ENCODE measurements at regions of chr16 and their contacts with region 1.

Region 1: DNA sequence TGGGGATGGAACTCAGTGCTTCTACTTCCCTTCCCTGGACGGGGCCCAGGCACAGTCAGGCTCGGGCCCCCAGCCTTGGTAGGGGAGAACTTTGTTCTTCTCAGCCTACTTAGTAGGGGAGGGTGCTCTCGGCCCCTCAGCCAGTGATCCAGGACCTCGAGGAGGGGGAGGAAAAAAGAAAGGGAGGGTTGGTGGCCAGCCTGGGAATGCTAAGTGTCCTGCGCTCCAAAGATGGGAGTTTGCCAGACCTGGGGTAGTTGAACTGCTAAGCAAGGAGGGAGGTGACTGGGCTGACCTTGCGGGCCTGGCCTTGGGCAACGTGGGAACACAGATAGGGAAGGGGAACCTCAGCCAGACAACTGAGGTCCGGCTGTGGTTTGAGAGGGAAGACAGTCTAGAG is 12.2 kb downstream of the ADGRG1 start:
- DNase-seq: peak in 1 of 5 donors; percentile 61
- ATAC-seq: no peak
- H3K4me3 ChIP-seq: no peak overlapping the region
- H3K27ac ChIP-seq: peak overlapping the region; percentile 22 to 93 (median 79)
- H3K4me1 ChIP-seq: peaks cover 5 to 82% (median 54%) of the 10 kb centered on the region in 12 donors
- H3K27me3 ChIP-seq: no peaks in the 10 kb centered on the region
- CTCF ChIP-seq: no peak
- POLR2A ChIP-seq: no peak

Region 2: GRCh38 chr16:57588831-57589230 is 51.8 kb before region 1 on chr16:
- intact Hi-C with region 1: no loop called
- DNase-seq: peak in 1 of 5 donors; percentile 2
- ATAC-seq: no peak
- H3K4me3 ChIP-seq: no peak overlapping the region
- H3K27ac ChIP-seq: no peak overlapping the region
- H3K4me1 ChIP-seq: peaks cover 0 to 25% (median 6%) of the 10 kb centered on the region in 12 donors
- H3K27me3 ChIP-seq: peaks cover 0 to 7% (median 0%) of the 10 kb centered on the region in 9 donors
- CTCF ChIP-seq: no peak
- POLR2A ChIP-seq: no peak

Region 3: GRCh38 chr16:57618306-57619127 is 22.1 kb before region 1 on chr16:
- intact Hi-C with region 1: no loop called
- DNase-seq: peak in 1 of 5 donors; percentile 3
- ATAC-seq: no peak
- H3K4me3 ChIP-seq: no peak overlapping the region
- H3K27ac ChIP-seq: no peak overlapping the region
- H3K4me1 ChIP-seq: peaks cover 0 to 12% (median 4%) of the 10 kb centered on the region in 12 donors
- H3K27me3 ChIP-seq: no peaks in the 10 kb centered on the region
- CTCF ChIP-seq: no peak
- POLR2A ChIP-seq: no peak

Region 4: DNA sequence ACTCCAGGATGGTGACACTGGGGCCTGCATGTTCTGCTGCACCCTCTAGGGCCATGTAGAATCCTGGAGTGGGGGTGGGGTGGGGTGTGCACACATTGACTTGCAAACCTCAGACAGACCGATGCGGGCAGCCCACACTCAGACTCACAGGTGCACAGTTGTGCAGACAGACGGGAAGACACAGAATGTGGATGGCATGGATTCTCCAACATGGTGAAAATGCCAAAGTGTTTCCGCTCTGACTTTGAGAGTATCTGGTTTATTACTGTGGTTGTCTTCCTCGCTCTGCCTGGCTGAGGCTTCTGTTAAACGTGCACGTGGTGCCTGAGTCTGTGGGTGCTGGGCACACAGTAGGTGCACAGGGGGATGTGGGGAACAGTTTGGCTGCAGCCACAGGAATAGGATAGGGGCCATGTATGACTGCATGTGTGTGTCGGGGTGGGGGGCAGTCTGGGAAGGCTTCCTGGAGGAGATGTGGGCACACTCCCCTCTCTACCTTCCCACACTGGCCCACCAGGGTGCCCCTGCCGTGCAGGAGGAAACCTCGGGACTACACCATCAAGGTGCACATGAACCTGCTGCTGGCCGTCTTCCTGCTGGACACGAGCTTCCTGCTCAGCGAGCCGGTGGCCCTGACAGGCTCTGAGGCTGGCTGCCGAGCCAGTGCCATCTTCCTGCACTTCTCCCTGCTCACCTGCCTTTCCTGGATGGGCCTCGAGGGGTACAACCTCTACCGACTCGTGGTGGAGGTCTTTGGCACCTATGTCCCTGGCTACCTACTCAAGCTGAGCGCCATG is 18.5 kb after region 1 on chr16:
- intact Hi-C with region 1: loop called in 1 of 10 experiments (anchors 1 kb)
- DNase-seq: no peak
- ATAC-seq: no peak
- H3K4me3 ChIP-seq: no peak overlapping the region
- H3K27ac ChIP-seq: no peak overlapping the region
- H3K4me1 ChIP-seq: no peaks in the 10 kb centered on the region
- H3K27me3 ChIP-seq: no peaks in the 10 kb centered on the region
- CTCF ChIP-seq: no peak
- POLR2A ChIP-seq: no peak

Region 5: DNA sequence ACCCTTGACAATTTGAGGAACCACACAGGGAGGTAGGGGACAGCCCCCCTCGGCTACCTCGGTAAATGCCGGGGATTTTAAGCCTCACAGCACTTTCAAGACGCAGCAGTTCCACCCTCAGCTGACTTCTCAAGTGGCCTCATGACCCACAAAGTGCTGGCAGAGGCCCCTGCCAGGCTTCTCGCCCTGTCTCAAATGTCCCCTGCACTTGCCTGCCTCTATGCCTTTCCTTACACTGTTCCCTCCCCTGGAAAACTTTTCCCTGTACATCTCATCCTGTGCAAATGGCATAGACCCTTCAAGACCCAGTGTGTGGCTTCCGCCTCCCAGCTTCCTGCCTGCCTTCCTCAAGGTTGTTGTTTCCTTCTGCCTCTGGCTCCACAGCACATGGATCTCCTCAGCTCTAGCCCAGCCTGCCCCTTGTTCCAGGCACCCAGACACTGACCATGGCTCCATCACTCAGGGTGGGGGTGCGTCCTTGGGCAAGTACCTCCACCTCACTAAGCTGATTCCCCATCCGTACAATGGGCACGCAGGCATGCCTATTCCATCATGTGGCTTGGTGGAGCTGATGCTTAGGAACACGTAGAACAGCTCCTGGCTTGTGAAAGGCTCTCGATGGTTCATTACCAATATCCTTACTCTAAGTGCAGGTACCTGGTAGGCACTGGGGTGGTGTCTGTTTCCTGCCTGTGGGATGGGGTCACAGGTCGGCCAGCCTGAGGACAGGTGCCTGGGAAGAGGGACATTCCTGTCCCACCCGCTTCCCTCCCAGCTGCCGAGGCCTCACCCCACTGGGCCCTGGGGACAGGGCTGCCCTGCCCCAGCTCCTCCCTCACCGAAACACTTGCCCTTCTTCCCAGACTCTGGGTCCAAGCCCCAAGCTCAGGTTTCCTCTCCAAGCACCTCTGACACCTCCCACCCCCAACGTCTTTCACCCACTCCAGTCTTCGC is 408.9 kb after region 1 on chr16:
- intact Hi-C with region 1: no loop called
- DNase-seq: peak in 1 of 5 donors; percentile 58
- ATAC-seq: peak in 2 of 4 donors; percentile 4
- H3K4me3 ChIP-seq: no peak overlapping the region
- H3K27ac ChIP-seq: peak overlapping the region in 8 of 12 donors; percentile 57 to 86 (median 70)
- H3K4me1 ChIP-seq: peaks cover 4 to 55% (median 34%) of the 10 kb centered on the region in 12 donors
- H3K27me3 ChIP-seq: no peaks in the 10 kb centered on the region
- CTCF ChIP-seq: no peak
- POLR2A ChIP-seq: no peak